Transverse colon (tissue), 4 donors: ENCODE measurements at regions of chr19 and their contacts with region 1.

Region 1: DNA sequence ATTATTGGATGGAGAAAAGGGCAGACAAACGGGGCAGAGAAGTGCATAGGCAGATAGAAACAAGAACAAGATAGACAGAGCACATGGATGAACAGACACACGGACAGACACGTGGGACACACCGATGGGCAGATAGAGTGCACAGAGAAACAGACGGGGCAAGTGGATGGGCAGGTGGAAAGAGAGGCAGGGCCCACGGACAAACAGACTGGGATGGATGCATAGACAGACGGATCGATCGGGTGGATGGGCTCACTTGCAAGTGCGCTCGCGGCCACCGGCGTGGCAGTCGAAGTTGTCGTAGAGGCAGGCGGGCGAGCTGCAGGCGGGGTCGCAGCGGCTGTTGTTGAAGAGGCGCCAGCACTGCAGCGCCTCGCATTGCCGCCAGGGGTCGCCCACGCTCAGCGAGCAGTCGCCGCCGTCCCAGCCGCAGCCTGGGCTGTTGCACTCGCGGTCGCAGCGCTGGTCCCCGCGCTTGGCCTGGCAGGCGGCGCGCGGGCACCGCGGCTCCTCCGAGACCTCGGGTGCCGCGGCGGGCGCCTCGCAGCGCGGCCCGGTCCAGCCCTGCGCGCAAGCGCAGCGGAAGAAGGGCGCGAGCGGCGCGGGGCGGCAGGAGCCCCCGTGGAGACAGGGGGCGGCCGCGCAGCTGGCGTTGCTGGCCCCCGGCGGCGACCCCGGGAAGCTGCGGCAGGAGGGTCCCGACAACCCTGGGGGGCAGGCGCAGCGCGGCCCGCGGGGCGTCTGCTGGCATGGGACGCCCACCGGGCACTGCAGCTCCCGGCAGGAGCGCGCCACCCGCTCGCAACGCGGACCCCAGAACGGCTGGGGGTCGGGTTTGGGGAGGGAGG is 23.3 kb downstream of the NOTCH3 start:
- DNase-seq: peak; percentile 83
- H3K4me3 ChIP-seq: peak overlapping the region in 2 of 4 donors; percentile 28 to 31
- H3K27ac ChIP-seq: no peak overlapping the region
- H3K4me1 ChIP-seq: peaks cover 0 to 8% (median 6%) of the 10 kb centered on the region in 4 donors
- H3K27me3 ChIP-seq: peaks cover 8% of the 10 kb centered on the region
- CTCF ChIP-seq: peak; percentile 77 to 97 (median 92)
- EP300 ChIP-seq: no peak
- POLR2A ChIP-seq: no peak

Region 2: DNA sequence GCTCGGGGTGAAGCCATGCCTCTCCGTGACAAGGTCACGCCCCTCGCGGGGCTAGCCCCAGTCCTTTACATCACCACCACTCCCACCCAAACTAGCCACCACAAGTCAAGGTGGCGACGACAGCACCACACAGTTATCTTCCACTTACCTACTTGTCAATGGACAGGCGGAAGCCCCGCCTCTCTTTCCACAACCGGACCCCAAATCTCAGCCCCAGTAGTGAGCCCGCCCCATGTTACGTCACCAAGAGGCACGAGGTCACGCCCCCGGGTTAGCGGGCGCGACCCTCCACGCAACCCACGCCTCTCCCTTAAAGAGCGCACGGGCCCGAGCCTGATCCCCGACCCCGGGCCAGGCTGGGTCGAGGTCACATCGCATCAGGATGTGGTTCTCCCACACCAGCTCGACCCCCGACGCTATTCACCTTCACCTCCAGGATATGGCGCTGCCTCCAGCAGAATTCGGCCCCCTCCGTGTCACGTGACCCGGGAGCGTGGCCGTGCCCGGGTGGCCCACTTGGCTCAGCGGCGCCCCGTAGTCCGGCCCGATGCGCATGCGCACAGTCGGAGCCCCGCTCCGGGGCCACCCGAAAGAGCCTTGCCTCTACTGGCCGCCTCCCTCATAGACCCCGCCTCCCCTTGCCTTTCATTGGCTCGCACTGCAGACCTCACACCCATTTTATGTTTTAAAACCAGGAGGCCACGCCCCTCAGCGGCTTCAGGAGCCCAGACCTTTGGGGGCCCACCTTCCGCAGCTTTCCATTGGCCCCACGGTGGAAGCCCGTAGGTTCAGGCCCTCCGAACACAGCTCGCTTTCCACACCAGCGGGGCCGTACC is 52.0 kb before region 1 on chr19:
- in situ Hi-C with region 1: no loop called
- intact Hi-C with region 1: no loop called
- DNase-seq: peak; percentile 99
- H3K4me3 ChIP-seq: peak overlapping the region; percentile 57 to 81 (median 68)
- H3K27ac ChIP-seq: peak overlapping the region; percentile 91 to 96 (median 92)
- H3K4me1 ChIP-seq: peaks cover 12 to 31% (median 19%) of the 10 kb centered on the region in 4 donors
- H3K27me3 ChIP-seq: no peaks in the 10 kb centered on the region
- CTCF ChIP-seq: peak in 2 of 5 experiments; percentile 23 to 54
- EP300 ChIP-seq: no peak
- POLR2A ChIP-seq: peak; percentile 72

Region 3: GRCh38 chr19:15251749-15252397 is 74.4 kb after region 1 on chr19:
- in situ Hi-C with region 1: no loop called
- intact Hi-C with region 1: loop called (anchors 10 kb)
- DNase-seq: peak; percentile 67
- H3K4me3 ChIP-seq: peak overlapping the region in 1 of 4 donors; percentile 2
- H3K27ac ChIP-seq: peak overlapping the region; percentile 82 to 90 (median 83)
- H3K4me1 ChIP-seq: peaks cover 42 to 59% (median 52%) of the 10 kb centered on the region in 4 donors
- H3K27me3 ChIP-seq: no peaks in the 10 kb centered on the region
- CTCF ChIP-seq: peak; percentile 31 to 58 (median 36)
- EP300 ChIP-seq: peak; percentile 46
- POLR2A ChIP-seq: no peak

Region 4: DNA sequence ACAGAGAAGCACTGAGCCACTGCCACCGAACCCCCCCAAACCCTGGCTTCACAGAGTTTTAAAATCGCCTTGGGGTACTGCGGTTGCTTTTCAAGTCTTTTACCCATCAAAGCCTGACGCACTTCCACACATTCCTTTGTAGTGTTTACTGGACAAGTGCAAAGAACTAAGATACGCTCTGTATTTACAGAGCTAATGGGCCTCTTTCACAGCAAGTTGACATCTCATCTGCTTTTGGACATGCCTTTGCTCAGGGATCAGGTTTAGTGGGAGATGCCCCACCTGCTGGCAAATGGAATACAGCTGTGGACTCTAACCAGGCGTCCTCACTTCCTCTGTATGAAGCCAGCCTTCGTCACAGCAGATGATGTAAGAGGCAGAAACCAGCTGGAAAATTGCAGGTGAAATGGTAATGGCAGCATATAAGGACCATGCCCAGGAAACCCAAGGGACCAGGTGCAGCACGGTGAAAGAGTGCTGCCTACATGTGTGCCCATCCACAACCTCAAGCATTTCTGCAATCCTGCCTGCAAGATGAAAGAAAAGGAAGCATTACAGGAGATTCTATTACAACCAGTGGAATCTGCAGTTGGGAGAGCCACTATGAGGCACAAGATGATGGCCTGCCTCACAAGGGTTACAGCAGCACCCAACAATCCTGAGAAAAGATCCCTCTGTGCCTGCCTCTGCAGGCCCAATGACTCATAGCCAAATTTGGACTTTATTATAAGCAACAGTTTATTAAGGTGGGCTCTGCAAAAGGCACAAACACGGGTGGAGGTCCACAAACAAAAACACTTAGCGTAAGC is 120.1 kb after region 1 on chr19:
- in situ Hi-C with region 1: no loop called
- intact Hi-C with region 1: no loop called
- DNase-seq: peak; percentile 43
- H3K4me3 ChIP-seq: no peak overlapping the region
- H3K27ac ChIP-seq: peak overlapping the region; percentile 50 to 68 (median 64)
- H3K4me1 ChIP-seq: peaks cover 59 to 96% (median 81%) of the 10 kb centered on the region in 4 donors
- H3K27me3 ChIP-seq: no peaks in the 10 kb centered on the region
- CTCF ChIP-seq: peak in 1 of 5 experiments; percentile 8
- EP300 ChIP-seq: no peak
- POLR2A ChIP-seq: no peak